GM12878 (cell line): ENCODE measurements at regions of chr1 and their contacts with region 1.

Region 1: GRCh38 chr1:18322368-18323032 is 158.2 kb upstream of the KLHDC7A start:
- DNase-seq: no peak
- ATAC-seq: no peak; the same call in 2 of the 3 replicates
- H3K4me3 ChIP-seq: no peak overlapping the region
- H3K27ac ChIP-seq: no peak overlapping the region
- H3K4me1 ChIP-seq: no peaks in the 10 kb centered on the region
- H3K27me3 ChIP-seq: no peaks in the 10 kb centered on the region
- CTCF ChIP-seq: peak; percentile 24 to 55 (median 34)
- EP300 ChIP-seq: no peak
- POLR2A ChIP-seq: no peak
- RAD21 ChIP-seq: 0 out of 2 replicates have a peak, but pooled peaks have one; percentile 7

Region 2: GRCh38 chr1:18339161-18339560 is 16.7 kb after region 1 on chr1:
- CTCF ChIA-PET with region 1: no interaction called
- POLR2A ChIA-PET with region 1: no interaction called
- RAD21 ChIA-PET with region 1: interaction called, 10 read pairs
- SMC1A ChIA-PET with region 1: no interaction called
- in situ Hi-C with region 1: no loop called
- intact Hi-C with region 1: no loop called
- DNase-seq: no peak
- ATAC-seq: peak; percentile 60
- H3K4me3 ChIP-seq: no peak overlapping the region
- H3K27ac ChIP-seq: no peak overlapping the region
- H3K4me1 ChIP-seq: peaks cover 27% of the 10 kb centered on the region
- H3K27me3 ChIP-seq: no peaks in the 10 kb centered on the region
- CTCF ChIP-seq: no peak
- EP300 ChIP-seq: no peak
- POLR2A ChIP-seq: no peak
- RAD21 ChIP-seq: no peak

Region 3: DNA sequence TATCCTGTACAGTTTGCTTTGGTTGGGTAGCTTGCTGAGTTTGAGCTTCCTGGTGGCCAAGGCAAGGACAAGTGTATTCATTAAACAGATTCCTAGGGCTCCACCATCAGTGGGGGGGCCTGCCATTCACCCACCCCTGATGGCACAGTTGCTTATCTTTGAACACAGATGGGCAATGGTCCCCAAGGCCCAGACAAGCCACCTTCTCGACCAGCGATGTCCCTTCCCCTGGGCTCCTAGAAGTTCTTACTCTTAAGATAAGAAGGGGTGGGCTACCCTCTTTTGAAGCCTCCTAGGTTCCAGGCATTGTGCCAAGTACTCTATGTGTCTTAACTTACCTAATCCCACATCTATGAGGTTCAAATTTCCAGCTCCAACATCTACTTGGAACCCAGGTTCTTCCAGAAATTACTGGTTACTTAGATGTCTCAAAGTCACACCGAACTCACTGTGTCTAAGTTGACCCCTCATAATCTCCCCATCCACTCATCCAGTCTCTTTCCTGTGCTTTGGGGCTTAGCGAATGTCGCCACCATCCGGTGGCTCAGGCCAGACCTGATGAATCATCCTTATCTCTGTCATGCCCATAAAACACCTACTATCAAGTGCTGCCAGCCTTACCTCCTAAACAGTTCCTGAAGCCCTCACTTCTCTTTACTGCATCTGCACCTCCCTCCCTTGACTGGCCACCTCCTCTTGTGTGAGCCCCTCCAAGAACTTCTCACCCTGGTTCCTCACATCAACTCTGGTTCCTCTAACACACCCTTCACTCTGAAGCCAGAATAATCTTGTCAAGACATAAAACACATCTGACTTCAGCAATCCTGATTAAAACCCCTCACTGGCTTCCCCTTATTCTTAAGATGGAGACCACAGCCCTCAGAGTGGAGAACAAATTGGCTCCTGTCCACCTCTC is 208.3 kb after region 1 on chr1:
- CTCF ChIA-PET with region 1: no interaction called
- POLR2A ChIA-PET with region 1: no interaction called
- RAD21 ChIA-PET with region 1: no interaction called
- SMC1A ChIA-PET with region 1: no interaction called
- in situ Hi-C with region 1: no loop called
- intact Hi-C with region 1: loop called (anchors 10 kb)
- DNase-seq: no peak
- ATAC-seq: no peak
- H3K4me3 ChIP-seq: no peak overlapping the region
- H3K27ac ChIP-seq: no peak overlapping the region
- H3K4me1 ChIP-seq: no peaks in the 10 kb centered on the region
- H3K27me3 ChIP-seq: no peaks in the 10 kb centered on the region; a peak in 1 of 4 replicates
- CTCF ChIP-seq: peak in 2 of 3 experiments; percentile 22 to 45; a peak in 2 of 6 replicates
- EP300 ChIP-seq: no peak
- POLR2A ChIP-seq: no peak
- RAD21 ChIP-seq: peak; percentile 33; the same call in 1 of the 2 replicates